Caco-2 (cell line): ENCODE measurements at regions of chr1 and their contacts with region 1.

Region 1: GRCh38 chr1:214123061-214123784 is 135.4 kb downstream of the PROX1 start:
- DNase-seq: peak; percentile 67 to 75
- H3K4me3 ChIP-seq: no peak overlapping the region
- H3K4me3 Mint-ChIP-seq: no peak overlapping the region
- H3K27ac Mint-ChIP-seq: peak overlapping the region; percentile 8
- H3K4me1 ChIP-seq: peaks cover 18% of the 10 kb centered on the region; the same call in 1 of the 2 replicates
- H3K4me1 Mint-ChIP-seq: peaks cover 17% of the 10 kb centered on the region
- H3K27me3 ChIP-seq: no peaks in the 10 kb centered on the region
- H3K27me3 Mint-ChIP-seq: no peaks in the 10 kb centered on the region
- CTCF ChIP-seq: peak; percentile 69 to 78

Region 2: DNA sequence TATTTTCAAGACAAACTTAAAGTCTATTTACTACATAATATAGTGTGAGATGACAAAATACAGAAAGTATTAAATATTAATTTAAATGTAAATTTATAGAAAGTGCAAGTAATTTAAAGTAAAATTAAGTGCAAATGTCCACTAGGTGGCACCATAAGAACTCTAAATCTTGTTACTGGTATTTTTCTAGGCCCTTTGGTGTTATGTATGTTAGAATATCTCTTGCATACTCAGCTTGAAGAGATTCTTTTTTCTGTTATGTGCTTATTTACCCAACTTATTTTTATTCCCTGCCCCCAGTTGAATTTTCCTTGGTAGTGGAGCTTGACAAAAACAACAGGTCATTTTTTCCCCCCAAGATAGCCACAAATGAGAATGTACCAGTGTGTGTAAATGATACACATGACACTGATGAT is 1000.7 kb before region 1 on chr1:
- CTCF ChIA-PET with region 1: interaction called, 3 read pairs
- POLR2A ChIA-PET with region 1: no interaction called
- intact Hi-C with region 1: loop called (anchors 1 kb)
- DNase-seq: peak in 1 of 2 experiments; percentile 39
- H3K4me3 ChIP-seq: no peak overlapping the region
- H3K4me3 Mint-ChIP-seq: no peak overlapping the region
- H3K27ac Mint-ChIP-seq: peak overlapping the region; percentile 65
- H3K4me1 ChIP-seq: peaks cover 22% of the 10 kb centered on the region
- H3K4me1 Mint-ChIP-seq: peaks cover 27% of the 10 kb centered on the region
- H3K27me3 ChIP-seq: no peaks in the 10 kb centered on the region
- H3K27me3 Mint-ChIP-seq: no peaks in the 10 kb centered on the region
- CTCF ChIP-seq: peak in 1 of 2 experiments; percentile 36

Region 3: DNA sequence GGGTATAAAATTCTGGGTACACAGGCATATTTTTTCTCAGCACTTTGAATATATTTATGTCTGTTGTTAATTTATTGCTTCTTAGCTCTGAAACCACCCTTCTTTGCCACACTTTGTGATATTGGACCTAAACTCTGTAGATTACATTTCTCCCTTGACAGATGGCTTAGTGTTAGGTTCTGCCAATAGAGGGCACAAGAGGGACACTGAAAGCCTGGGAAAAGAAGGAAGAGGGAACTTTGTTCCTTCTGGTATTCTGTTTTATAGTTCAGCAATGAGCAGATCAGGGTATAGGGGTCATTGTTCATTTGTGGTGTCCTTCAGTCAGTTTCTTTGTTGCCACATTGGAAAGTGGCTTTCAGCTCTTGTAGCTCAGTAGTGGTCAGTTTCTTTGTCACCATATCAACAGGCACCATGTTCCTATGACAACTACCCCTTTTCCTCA is 559.0 kb before region 1 on chr1:
- CTCF ChIA-PET with region 1: interaction called, 3 read pairs
- POLR2A ChIA-PET with region 1: no interaction called
- intact Hi-C with region 1: loop called (anchors 1 kb)
- DNase-seq: peak in 1 of 2 experiments; percentile 54
- H3K4me3 ChIP-seq: no peak overlapping the region
- H3K4me3 Mint-ChIP-seq: no peak overlapping the region
- H3K27ac Mint-ChIP-seq: no peak overlapping the region
- H3K4me1 ChIP-seq: peaks cover 7% of the 10 kb centered on the region
- H3K4me1 Mint-ChIP-seq: peaks cover 12% of the 10 kb centered on the region
- H3K27me3 ChIP-seq: no peaks in the 10 kb centered on the region
- H3K27me3 Mint-ChIP-seq: no peaks in the 10 kb centered on the region
- CTCF ChIP-seq: peak; percentile 48 to 64

Region 4: DNA sequence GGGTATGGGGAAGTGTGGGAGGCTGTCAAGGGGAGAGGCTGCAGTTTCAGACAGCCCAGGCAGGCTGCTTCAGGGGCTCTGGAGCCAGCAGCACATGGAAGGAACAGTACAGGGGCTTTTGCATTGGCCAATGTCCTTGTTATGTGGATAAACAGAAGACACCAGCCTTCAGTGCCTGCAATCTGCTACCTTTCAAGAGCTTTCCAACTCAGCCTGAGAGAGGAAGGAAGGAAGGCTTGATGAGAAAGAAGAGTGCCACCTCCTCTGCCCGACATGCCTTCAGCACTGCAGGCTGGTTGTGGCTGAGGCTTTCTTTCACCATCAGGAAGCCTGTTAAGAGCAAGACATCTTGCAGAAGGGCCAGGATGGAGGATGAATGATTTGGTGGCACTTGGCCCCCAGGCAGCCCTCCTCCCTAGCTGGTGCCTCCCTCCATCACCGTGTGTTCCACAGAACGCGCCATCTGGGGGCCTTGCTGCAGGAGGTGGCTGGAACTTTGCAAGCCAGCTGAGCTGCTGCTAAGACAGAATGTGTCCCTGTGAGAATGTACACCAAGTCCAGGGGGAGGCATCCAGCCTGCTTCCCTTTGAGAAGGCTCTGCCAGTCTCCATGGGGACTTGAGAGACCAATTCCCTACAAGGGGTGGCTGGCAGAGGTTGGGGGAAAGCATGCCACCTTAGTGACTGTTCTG is 507.9 kb before region 1 on chr1:
- CTCF ChIA-PET with region 1: no interaction called
- POLR2A ChIA-PET with region 1: no interaction called
- intact Hi-C with region 1: no loop called
- DNase-seq: no peak
- H3K4me3 ChIP-seq: no peak overlapping the region
- H3K4me3 Mint-ChIP-seq: no peak overlapping the region
- H3K27ac Mint-ChIP-seq: peak overlapping the region; percentile 32
- H3K4me1 ChIP-seq: peaks cover 35% of the 10 kb centered on the region
- H3K4me1 Mint-ChIP-seq: peaks cover 27% of the 10 kb centered on the region
- H3K27me3 ChIP-seq: no peaks in the 10 kb centered on the region
- H3K27me3 Mint-ChIP-seq: no peaks in the 10 kb centered on the region
- CTCF ChIP-seq: no peak

Region 5: GRCh38 chr1:213864091-213864490 is 259.1 kb before region 1 on chr1:
- CTCF ChIA-PET with region 1: no interaction called
- POLR2A ChIA-PET with region 1: no interaction called
- intact Hi-C with region 1: loop called (anchors 10 kb)
- DNase-seq: no peak
- H3K4me3 ChIP-seq: no peak overlapping the region
- H3K4me3 Mint-ChIP-seq: no peak overlapping the region
- H3K27ac Mint-ChIP-seq: no peak overlapping the region
- H3K4me1 ChIP-seq: no peaks in the 10 kb centered on the region
- H3K4me1 Mint-ChIP-seq: no peaks in the 10 kb centered on the region
- H3K27me3 ChIP-seq: no peaks in the 10 kb centered on the region
- H3K27me3 Mint-ChIP-seq: no peaks in the 10 kb centered on the region
- CTCF ChIP-seq: no peak

Region 6: GRCh38 chr1:213987927-213988506 is 135.2 kb before region 1 on chr1 and contains the start of gene PROX1:
- CTCF ChIA-PET with region 1: interaction called, 11 read pairs
- POLR2A ChIA-PET with region 1: interaction called, 5 read pairs
- intact Hi-C with region 1: loop called (anchors 1 kb)
- DNase-seq: peak in 1 of 2 experiments; percentile 87
- H3K4me3 ChIP-seq: peak within 1 kb of the TSS; percentile 63
- H3K4me3 Mint-ChIP-seq: peak within 1 kb of the TSS; percentile 99
- H3K27ac Mint-ChIP-seq: peak within 1 kb of the TSS; percentile 89
- H3K4me1 ChIP-seq: peaks cover 25% of the 10 kb centered on the region
- H3K4me1 Mint-ChIP-seq: peaks cover 21% of the 10 kb centered on the region
- H3K27me3 ChIP-seq: no peaks in the 10 kb centered on the region; the same call in 1 of the 2 replicates
- H3K27me3 Mint-ChIP-seq: peaks cover 8% of the 10 kb centered on the region
- CTCF ChIP-seq: peak in 1 of 2 experiments; percentile 32
- total RNA-seq, gene PROX1: 17.6 and 24.5 TPM in 2 replicates

Region 7: GRCh38 chr1:214050513-214051401 is 72.5 kb before region 1 on chr1:
- CTCF ChIA-PET with region 1: interaction called, 5 read pairs
- POLR2A ChIA-PET with region 1: no interaction called
- intact Hi-C with region 1: loop called (anchors 5 kb)
- DNase-seq: peak; percentile 74 to 76
- H3K4me3 ChIP-seq: no peak overlapping the region
- H3K4me3 Mint-ChIP-seq: peak overlapping the region; percentile 0
- H3K27ac Mint-ChIP-seq: peak overlapping the region; percentile 5
- H3K4me1 ChIP-seq: peaks cover 27% of the 10 kb centered on the region
- H3K4me1 Mint-ChIP-seq: peaks cover 25% of the 10 kb centered on the region
- H3K27me3 ChIP-seq: no peaks in the 10 kb centered on the region
- H3K27me3 Mint-ChIP-seq: no peaks in the 10 kb centered on the region
- CTCF ChIP-seq: no peak